Heart right ventricle (tissue), 16 donors: ENCODE measurements at regions of chr22 and their contacts with region 1.

Region 1: DNA sequence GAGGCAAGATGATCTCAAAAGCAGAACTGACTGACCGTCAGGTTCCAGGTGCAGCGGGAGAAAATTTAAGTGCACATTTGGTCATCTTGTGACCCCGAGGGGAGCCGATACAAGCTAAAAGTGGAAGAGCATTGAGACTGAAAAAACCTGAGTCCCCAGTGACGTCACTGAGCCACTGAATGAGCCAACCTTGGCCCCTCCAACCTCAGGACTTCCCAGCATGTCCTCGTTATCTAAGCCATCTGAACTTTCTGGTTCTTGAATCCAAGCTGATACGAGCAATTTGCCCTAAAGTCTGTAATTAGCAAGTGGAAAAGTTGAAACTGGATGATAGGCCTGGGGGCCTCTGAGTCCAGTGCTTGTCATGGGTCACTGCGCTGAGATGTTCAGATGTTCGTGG is 51.1 kb upstream of the ISX start:
- DNase-seq: no peak
- ATAC-seq: no peak
- H3K4me3 ChIP-seq: no peak overlapping the region
- H3K27ac ChIP-seq: no peak overlapping the region
- H3K4me1 ChIP-seq: no peaks in the 10 kb centered on the region
- H3K27me3 ChIP-seq: peaks cover 0 to 15% (median 4%) of the 10 kb centered on the region in 7 donors
- CTCF ChIP-seq: no peak

Region 2: GRCh38 chr22:33932997-33933396 is 1081.8 kb before region 1 on chr22:
- intact Hi-C with region 1: loop called in 4 of 10 experiments (anchors 10 kb)
- DNase-seq: no peak
- ATAC-seq: no peak
- H3K4me3 ChIP-seq: no peak overlapping the region
- H3K27ac ChIP-seq: no peak overlapping the region
- H3K4me1 ChIP-seq: no peaks in the 10 kb centered on the region
- H3K27me3 ChIP-seq: peaks cover 0 to 19% (median 0%) of the 10 kb centered on the region in 7 donors
- CTCF ChIP-seq: no peak

Region 3: DNA sequence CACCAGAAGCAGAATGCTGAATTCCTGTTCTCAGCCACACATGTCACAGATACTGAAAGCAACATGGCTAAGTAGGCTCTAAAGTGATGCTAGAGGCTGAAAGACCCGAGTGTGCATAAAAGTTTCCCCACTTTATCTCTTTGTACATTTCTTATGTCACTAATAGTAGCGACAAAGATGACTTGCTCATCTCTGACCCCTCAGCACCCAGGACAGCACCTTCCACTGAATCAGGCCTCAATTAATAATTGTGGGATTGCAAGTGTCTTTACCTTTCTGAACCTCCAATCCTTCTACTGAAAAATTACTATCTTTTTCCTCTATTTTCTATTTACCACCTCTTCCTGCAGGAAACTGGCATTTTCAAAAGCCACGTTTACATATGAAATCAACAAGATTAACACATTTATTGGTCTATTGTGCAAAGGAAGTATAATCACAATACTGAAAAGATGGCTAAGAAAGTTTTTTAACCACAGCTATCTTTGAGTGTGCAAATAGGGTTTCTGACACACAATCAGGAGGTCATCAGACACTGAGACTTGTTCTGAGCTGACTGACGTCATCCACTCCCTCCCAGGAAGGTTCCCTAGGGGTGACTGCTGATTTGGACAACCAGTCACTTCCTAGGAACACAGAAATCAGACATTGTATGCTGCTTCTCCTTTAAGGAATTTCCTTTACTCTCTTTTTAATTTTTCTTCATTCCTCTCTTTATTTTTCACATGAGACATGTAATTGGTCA is 162.7 kb before region 1 on chr22:
- intact Hi-C with region 1: no loop called
- DNase-seq: no peak
- ATAC-seq: no peak
- H3K4me3 ChIP-seq: no peak overlapping the region
- H3K27ac ChIP-seq: no peak overlapping the region
- H3K4me1 ChIP-seq: no peaks in the 10 kb centered on the region
- H3K27me3 ChIP-seq: peaks cover 0 to 3% (median 0%) of the 10 kb centered on the region in 7 donors
- CTCF ChIP-seq: no peak